ENCODE measurements at regions of chr15 and their contacts with region 1.

Region 1: GRCh38 chr15:25693321-25694237 is 169.5 kb downstream of the ATP10A start:
- DNase-seq: no peak
- H3K4me3 ChIP-seq: no peak overlapping the region
- H3K27ac ChIP-seq: no peak overlapping the region
- H3K4me1 ChIP-seq: no peaks in the 10 kb centered on the region
- H3K27me3 ChIP-seq: no peaks in the 10 kb centered on the region
- CTCF ChIP-seq: peak in 3 of 4 experiments; percentile 46 to 64 (median 50)
- POLR2A ChIP-seq: no peak

Region 2: GRCh38 chr15:25933456-25934158 is 240.0 kb after region 1 on chr15:
- intact Hi-C with region 1: loop called (anchors 2 kb)
- DNase-seq: peak; percentile 57
- H3K4me3 ChIP-seq: no peak overlapping the region
- H3K27ac ChIP-seq: no peak overlapping the region
- H3K4me1 ChIP-seq: no peaks in the 10 kb centered on the region
- H3K27me3 ChIP-seq: no peaks in the 10 kb centered on the region
- CTCF ChIP-seq: peak; percentile 27 to 66 (median 50)
- POLR2A ChIP-seq: no peak

Measured in prostate gland (tissue), 2 donors.